ENCODE measurements at regions of chr12 and their contacts with region 1.

Region 1: GRCh38 chr12:52023182-52023975 is 16.6 kb downstream of the TAMALIN start:
- DNase-seq: peak; percentile 35 to 83
- H3K4me3 ChIP-seq: peak overlapping the region; percentile 71
- H3K27ac ChIP-seq: no peak overlapping the region
- H3K4me1 ChIP-seq: 0 out of 2 replicates have a peak, but pooled peaks cover 6% of the 10 kb centered on the region
- H3K27me3 ChIP-seq: peaks cover 4% of the 10 kb centered on the region; the same call in 1 of the 2 replicates
- CTCF ChIP-seq: peak; percentile 96

Region 2: DNA sequence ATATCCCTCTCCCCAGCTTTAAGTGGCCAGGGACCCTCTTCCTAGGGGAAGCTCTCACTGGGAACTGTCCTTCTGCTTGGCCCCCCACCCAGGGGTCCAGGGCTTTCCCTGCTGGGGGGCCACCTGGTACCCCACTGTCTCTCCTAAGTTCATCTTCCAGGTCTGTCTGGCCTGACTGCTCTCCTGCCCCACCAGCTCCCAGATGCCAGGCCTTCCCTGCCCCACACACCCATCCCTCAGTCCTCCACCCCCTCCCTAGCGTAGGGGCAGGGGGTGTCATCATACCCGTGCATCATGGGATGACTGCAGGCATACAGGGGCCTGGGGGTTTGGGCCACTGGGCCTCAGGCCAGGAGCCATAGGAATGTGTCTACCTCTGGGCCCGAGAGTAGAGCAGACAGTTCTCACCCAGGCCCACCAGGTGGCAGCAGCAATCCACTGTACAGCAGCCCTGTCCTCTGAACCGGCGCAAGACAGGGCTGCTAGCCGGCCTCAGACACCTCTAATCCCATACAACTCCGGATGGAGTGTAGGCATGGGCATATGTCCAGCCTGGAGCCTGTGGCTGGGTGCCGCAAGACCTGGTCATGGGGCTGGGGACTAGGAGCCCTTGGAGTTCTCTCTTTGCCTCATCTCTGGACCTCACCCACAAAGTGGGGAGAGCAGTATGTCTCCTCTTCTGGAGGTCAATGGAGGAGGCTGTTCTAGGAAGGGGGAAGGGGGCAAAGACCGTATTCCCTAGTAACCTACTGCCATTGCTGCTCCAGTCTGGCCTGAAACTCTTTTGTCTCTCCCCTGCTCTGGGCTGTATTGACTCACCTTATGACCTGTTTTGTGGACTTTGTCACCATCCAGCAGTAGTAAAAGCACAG is 1948.2 kb before region 1 on chr12:
- CTCF ChIA-PET with region 1: no interaction called
- POLR2A ChIA-PET with region 1: no interaction called
- intact Hi-C with region 1: loop called (anchors 5 kb)
- DNase-seq: peak; percentile 71 to 84
- H3K4me3 ChIP-seq: no peak overlapping the region
- H3K27ac ChIP-seq: no peak overlapping the region
- H3K4me1 ChIP-seq: no peaks in the 10 kb centered on the region
- H3K27me3 ChIP-seq: no peaks in the 10 kb centered on the region
- CTCF ChIP-seq: peak; percentile 91

Region 3: DNA sequence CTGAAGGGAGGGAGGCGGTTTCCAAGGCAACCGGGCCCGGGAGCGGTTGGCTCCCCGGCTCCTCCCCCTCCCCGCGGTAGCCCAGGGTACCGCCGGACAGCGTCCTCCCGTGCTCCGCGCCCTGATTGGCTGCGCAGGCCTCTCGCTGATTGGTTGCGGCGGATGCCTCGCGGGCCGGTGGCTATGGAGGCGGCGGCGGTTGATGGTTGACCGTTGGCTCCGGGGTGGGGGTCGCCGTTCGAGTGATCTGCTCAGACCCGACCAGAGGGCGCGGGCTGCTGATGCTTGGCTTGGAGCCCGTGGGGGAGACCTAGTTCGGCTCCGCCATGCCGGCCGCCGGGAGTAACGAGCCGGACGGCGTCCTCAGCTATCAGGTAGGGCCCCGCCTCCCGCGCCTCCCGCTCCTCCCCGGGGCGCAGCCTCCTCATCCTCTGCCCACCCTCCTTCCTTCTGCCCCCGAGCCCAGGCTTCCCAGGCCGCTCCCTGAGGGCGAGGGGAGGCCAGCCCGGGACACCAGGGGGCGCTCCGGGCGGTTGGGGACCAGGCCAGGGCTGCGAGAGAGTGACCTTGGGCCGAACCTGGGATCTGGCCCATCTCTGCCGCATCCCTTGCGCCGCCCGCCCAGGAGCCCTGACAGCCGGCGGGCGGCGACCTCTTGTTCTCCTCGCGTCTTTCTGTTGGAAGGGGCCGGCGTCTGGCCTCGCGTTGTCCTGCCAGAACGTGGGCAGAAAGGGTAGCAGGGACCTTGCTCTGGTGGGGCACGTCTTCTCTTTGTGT is 598.5 kb before region 1 on chr12 and contains the start of gene SLC4A8:
- CTCF ChIA-PET with region 1: interaction called, 3 read pairs
- POLR2A ChIA-PET with region 1: no interaction called
- intact Hi-C with region 1: loop called (anchors 1 kb)
- DNase-seq: peak in 1 of 2 experiments; percentile 53
- H3K4me3 ChIP-seq: no peak within 1 kb of the TSS
- H3K27ac ChIP-seq: no peak within 1 kb of the TSS
- H3K4me1 ChIP-seq: no peaks in the 10 kb centered on the region
- H3K27me3 ChIP-seq: no peaks in the 10 kb centered on the region
- CTCF ChIP-seq: peak; percentile 55; the same call in 1 of the 2 replicates
- total RNA-seq, gene SLC4A8: 2.6 and 3.0 TPM in 2 replicates

Region 4: GRCh38 chr12:51823875-51824565 is 199.4 kb before region 1 on chr12:
- CTCF ChIA-PET with region 1: no interaction called
- POLR2A ChIA-PET with region 1: no interaction called
- intact Hi-C with region 1: no loop called
- DNase-seq: peak; percentile 30 to 39
- H3K4me3 ChIP-seq: no peak overlapping the region
- H3K27ac ChIP-seq: no peak overlapping the region
- H3K4me1 ChIP-seq: no peaks in the 10 kb centered on the region
- H3K27me3 ChIP-seq: peaks cover 22% of the 10 kb centered on the region
- CTCF ChIP-seq: peak; percentile 61

Region 5: DNA sequence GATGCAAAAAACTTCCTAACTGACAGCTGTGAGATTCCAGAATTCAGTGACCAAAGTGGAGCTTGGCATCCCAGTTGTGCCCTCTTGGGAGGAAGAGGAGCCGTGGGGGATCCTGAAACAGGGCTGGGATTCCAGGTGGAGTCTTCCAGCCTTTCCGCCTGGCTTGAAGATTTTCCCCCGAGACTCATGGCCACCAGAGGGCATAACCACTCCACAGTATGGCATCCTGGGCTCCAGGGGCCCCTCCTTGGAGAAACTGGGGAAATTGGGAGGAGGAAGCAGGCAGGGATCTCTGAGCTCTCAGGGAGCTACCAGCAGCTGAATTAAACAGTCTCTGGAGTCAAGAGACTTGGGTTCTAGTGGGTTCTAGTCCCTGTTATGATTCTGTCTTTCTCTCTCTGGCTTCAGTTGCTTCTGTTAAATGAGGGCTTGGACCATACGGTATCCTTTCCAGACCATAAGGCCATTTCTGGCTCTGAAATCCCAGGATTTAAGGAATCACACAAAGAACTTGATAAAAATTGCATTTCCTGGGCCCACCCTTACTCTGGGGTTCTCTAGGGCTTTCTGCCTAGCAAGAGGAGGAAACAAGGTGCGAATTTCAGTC is 19.2 kb before region 1 on chr12:
- CTCF ChIA-PET with region 1: interaction called, 25 read pairs
- POLR2A ChIA-PET with region 1: no interaction called
- intact Hi-C with region 1: loop called (anchors 1 kb)
- DNase-seq: peak in 1 of 2 experiments; percentile 69
- H3K4me3 ChIP-seq: no peak overlapping the region
- H3K27ac ChIP-seq: no peak overlapping the region
- H3K4me1 ChIP-seq: no peaks in the 10 kb centered on the region
- H3K27me3 ChIP-seq: no peaks in the 10 kb centered on the region
- CTCF ChIP-seq: peak; percentile 68

Region 6: DNA sequence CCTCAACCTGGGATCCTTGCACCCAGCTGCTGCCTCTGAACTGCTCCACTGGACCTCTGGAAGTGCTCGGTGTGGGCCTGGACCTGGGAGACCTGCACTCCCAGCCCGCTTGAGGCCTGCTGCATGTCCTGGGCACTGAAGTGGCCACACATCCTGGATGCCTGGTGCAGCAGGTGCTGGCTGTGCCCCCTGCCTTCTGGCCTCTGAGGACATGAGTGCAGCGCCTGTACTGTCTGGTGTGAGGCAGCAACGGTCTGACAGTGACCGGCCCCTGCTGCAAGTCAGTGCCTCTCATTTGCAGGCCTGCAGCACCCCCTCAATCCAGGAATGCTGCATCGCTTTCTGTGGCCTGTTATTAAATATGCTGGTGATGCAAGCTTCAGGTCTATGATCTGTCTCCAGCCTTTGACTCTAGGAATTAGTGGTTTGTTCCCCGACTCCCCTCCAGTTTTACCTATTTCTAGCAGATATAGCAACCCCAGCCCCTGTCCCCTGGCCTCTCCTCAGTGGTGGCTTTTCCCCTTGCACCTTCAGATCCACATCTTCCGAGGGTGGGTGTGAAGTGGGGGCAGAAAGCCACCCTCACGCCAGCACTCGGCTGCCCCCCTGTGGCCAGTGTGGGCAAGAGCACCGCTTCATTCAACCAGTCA is 59.7 kb after region 1 on chr12:
- CTCF ChIA-PET with region 1: interaction called, 20 read pairs
- POLR2A ChIA-PET with region 1: no interaction called
- intact Hi-C with region 1: loop called (anchors 1 kb)
- DNase-seq: peak in 1 of 2 experiments; percentile 57
- H3K4me3 ChIP-seq: no peak overlapping the region
- H3K27ac ChIP-seq: no peak overlapping the region
- H3K4me1 ChIP-seq: no peaks in the 10 kb centered on the region
- H3K27me3 ChIP-seq: no peaks in the 10 kb centered on the region
- CTCF ChIP-seq: peak; percentile 99

Region 7: GRCh38 chr12:52395761-52396434 is 372.5 kb after region 1 on chr12:
- CTCF ChIA-PET with region 1: no interaction called
- POLR2A ChIA-PET with region 1: no interaction called
- intact Hi-C with region 1: no loop called
- DNase-seq: peak; percentile 72 to 76
- H3K4me3 ChIP-seq: no peak overlapping the region
- H3K27ac ChIP-seq: no peak overlapping the region
- H3K4me1 ChIP-seq: peaks cover 9% of the 10 kb centered on the region
- H3K27me3 ChIP-seq: no peaks in the 10 kb centered on the region
- CTCF ChIP-seq: peak; percentile 80

Region 8: DNA sequence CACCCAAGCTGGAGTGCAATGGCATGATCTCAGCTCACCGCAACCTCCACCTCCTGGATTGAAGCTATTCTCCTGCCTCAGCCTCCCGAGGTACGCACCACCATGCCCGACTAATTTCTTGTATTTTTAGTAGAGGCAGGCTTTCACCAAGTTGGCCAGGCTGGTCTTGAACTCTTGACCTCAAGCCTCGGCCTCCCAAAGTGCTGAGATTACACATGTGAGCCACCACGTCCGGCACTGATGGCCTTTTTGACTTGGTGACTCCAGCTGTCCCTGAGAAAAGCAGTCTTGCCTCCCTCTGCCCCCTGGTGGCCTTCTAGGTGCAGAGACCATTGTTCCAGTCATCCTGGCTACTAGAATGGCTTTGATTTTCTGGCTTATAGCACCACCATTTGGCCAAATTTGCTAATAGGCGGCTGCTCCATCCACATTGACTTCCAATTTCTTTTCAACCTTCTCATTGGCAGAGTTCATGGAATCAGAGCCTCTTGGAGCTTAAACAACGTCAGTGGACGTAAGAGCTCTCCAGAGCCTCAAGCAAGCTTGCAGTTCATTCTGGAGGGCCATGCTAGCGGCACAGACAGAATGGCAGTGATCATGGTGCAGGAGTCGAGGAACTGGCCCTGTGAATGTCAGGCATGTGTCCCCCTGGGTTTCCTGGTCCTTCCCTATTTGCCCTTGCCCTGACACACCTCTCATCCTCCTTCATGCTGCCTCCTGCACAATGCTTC is 957.5 kb after region 1 on chr12:
- CTCF ChIA-PET with region 1: no interaction called
- POLR2A ChIA-PET with region 1: no interaction called
- intact Hi-C with region 1: loop called (anchors 2 kb)
- DNase-seq: peak; percentile 87 to 91
- H3K4me3 ChIP-seq: no peak overlapping the region
- H3K27ac ChIP-seq: no peak overlapping the region
- H3K4me1 ChIP-seq: peaks cover 26% of the 10 kb centered on the region
- H3K27me3 ChIP-seq: no peaks in the 10 kb centered on the region
- CTCF ChIP-seq: peak; percentile 98

Measured in PC-9 (cell line).